Naive thymus-derived CD4-positive, alpha-beta T cell (primary cell): ENCODE measurements at regions of chr10 and their contacts with region 1.

Region 1: DNA sequence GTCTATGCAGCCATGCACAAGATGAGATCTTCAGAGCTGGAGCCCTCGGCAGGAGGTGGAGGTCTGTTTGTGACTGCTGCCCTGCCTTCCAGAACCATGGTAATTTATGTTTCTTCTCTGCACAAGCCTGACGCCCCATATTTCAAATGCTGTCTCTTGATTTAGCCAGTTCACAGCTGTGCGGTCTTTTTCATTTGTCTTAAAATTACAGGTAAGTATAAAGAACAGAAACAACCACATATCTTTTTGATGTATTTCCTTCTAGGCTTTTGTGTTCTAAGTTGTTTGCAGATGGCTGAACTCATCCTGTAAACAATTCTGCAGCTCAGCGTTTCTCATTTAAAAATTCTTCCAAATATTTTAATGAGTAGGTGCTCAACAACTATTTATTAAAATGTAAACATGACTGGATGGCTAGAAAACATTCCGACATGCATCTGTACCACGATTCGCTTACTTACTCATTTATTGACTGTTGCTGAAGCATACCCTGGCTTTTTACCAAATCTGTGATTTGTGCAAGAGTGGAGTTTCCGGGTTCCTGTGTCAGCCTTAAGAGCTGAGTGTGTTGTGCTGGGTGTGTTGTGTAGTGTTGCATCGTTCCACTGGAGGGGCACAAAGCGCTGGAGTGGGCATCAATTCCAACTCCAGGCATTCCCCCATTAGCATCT is 58.9 kb downstream of the PIP4K2A start:
- DNase-seq: peak in 7 of 9 donors; percentile 69 to 90 (median 86)
- ATAC-seq: peak; percentile 89
- H3K4me3 ChIP-seq: peak overlapping the region; percentile 23
- H3K4me3 Mint-ChIP-seq: peak overlapping the region; percentile 67 to 87 (median 81)
- H3K27ac ChIP-seq: peak overlapping the region; percentile 54
- H3K27ac Mint-ChIP-seq: peak overlapping the region; percentile 82 to 97 (median 92)
- H3K4me1 ChIP-seq: peaks cover 84 to 88% of the 10 kb centered on the region in 2 donors
- H3K4me1 Mint-ChIP-seq: peaks cover 84 to 100% (median 90%) of the 10 kb centered on the region in 7 donors
- H3K27me3 ChIP-seq: no peaks in the 10 kb centered on the region
- H3K27me3 Mint-ChIP-seq: no peaks in the 10 kb centered on the region

Region 2: DNA sequence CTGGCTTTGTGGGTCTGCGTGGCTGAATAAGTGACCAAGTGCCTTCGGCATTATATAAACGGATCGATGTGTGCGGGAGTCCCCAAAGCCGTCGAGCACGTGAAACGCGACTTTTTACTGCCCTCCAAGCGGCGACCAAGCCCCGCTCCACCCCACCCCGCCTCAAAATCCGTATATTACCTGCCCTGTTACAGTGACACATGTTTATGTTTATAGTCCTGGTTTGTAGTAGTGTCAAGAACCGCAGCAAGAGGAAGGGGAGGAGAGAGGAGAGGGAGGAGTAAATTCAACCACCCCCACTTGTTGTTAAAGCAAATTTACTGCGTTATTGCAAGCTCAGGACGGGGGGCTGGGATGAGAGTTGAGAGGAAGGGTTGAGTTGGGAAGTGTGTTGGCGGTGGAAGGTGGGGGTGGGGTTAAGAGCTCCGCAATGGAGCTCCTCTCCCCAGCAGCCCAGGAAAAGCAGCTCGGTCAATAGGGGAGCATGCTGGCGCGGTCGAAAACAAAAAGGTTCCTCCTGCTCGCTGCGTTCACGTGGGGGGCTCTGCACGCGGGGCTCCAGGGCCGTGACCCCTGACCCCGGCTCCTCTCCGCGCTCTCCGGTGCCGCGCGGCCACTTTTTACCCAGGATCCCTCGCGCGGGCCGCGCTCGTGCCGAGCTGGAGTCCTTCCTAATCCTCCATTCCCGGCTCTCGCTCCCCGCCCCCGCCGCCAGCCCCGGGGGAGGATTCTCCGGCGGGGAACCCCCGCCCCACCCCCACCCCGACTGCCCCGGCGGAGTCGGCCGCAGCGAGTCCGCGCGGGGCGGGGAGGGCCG is 1129.9 kb before region 1 on chr10 and contains the start of gene SKIDA1:
- CTCF ChIA-PET with region 1: no interaction called
- POLR2A ChIA-PET with region 1: no interaction called
- intact Hi-C with region 1: loop called in 1 of 2 experiments (anchors 10 kb)
- DNase-seq: peak; percentile 31 to 72 (median 64)
- ATAC-seq: peak; percentile 73
- H3K4me3 ChIP-seq: peak within 1 kb of the TSS; percentile 79
- H3K4me3 Mint-ChIP-seq: peak within 1 kb of the TSS; percentile 85 to 99 (median 96)
- H3K27ac ChIP-seq: peak within 1 kb of the TSS; percentile 68
- H3K27ac Mint-ChIP-seq: peak within 1 kb of the TSS; percentile 87 to 98 (median 97)
- H3K4me1 ChIP-seq: peaks cover 4 to 17% of the 10 kb centered on the region in 2 donors
- H3K4me1 Mint-ChIP-seq: peaks cover 16 to 39% (median 38%) of the 10 kb centered on the region in 7 donors
- H3K27me3 ChIP-seq: peaks cover 4 to 6% of the 10 kb centered on the region in 2 donors
- H3K27me3 Mint-ChIP-seq: peaks cover 20 to 70% (median 38%) of the 10 kb centered on the region in 5 donors
- total RNA-seq, gene SKIDA1: 0.17 to 0.45 (median 0.28) TPM in 4 of 5 experiments, not detected in the other

Region 3: GRCh38 chr10:21989453-21990154 is 665.8 kb before region 1 on chr10:
- CTCF ChIA-PET with region 1: no interaction called
- POLR2A ChIA-PET with region 1: no interaction called
- intact Hi-C with region 1: no loop called
- DNase-seq: peak in 7 of 9 donors; percentile 14 to 52 (median 36)
- ATAC-seq: peak; percentile 89
- H3K4me3 ChIP-seq: no peak overlapping the region
- H3K4me3 Mint-ChIP-seq: no peak overlapping the region
- H3K27ac ChIP-seq: no peak overlapping the region
- H3K27ac Mint-ChIP-seq: peak overlapping the region in 2 of 9 donors; percentile 10 to 47
- H3K4me1 ChIP-seq: no peaks in the 10 kb centered on the region
- H3K4me1 Mint-ChIP-seq: peaks cover 0 to 14% (median 5%) of the 10 kb centered on the region in 7 donors
- H3K27me3 ChIP-seq: no peaks in the 10 kb centered on the region
- H3K27me3 Mint-ChIP-seq: no peaks in the 10 kb centered on the region

Region 4: DNA sequence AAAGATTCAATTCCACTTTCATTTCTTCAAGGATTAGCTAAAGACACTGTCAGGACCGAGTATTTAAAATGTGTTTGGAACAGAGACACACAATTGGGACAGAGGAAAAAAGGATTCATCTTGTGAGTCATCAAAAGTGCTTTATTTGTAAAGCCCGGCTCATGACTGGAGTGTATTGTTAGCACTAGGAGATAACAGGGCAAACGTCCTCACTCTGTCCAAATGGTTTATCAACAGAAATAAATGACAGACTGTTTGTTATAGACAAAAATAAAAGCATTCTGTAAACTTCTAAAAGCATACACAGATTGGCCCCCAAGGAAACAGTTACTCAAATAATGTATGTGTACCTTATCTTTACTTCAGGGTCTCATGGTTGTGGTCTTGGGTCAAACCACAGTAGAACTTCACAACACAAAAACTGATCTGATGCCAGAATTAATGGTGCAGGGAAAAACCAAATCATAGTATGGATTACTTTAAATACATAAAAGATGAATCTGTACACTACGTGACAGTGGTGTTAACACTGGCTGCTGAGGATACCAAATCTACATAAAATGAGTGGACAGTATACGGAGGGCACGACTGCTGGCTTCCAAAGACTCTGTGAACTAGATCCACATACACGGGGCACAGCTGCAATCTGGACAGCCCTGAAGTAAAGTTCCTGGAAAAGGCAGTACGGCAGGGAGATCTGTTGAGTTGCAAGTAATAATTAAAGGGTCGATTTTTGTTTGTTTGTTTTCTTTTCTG is 120.4 kb before region 1 on chr10:
- CTCF ChIA-PET with region 1: no interaction called
- POLR2A ChIA-PET with region 1: no interaction called
- intact Hi-C with region 1: no loop called
- DNase-seq: no peak
- ATAC-seq: no peak
- H3K4me3 ChIP-seq: no peak overlapping the region
- H3K4me3 Mint-ChIP-seq: no peak overlapping the region
- H3K27ac ChIP-seq: no peak overlapping the region
- H3K27ac Mint-ChIP-seq: peak overlapping the region in 2 of 9 donors; percentile 12 to 16
- H3K4me1 ChIP-seq: no peaks in the 10 kb centered on the region
- H3K4me1 Mint-ChIP-seq: no peaks in the 10 kb centered on the region
- H3K27me3 ChIP-seq: no peaks in the 10 kb centered on the region
- H3K27me3 Mint-ChIP-seq: no peaks in the 10 kb centered on the region

Region 5: GRCh38 chr10:22630234-22631174 is 24.9 kb before region 1 on chr10:
- CTCF ChIA-PET with region 1: interaction called, 5 read pairs
- POLR2A ChIA-PET with region 1: interaction called, 11 read pairs
- intact Hi-C with region 1: loop called in 1 of 2 experiments (anchors 1 kb)
- DNase-seq: peak in 6 of 9 donors; percentile 27 to 73 (median 38)
- ATAC-seq: peak; percentile 89
- H3K4me3 ChIP-seq: peak overlapping the region; percentile 37
- H3K4me3 Mint-ChIP-seq: peak overlapping the region; percentile 3 to 85 (median 72)
- H3K27ac ChIP-seq: peak overlapping the region; percentile 68
- H3K27ac Mint-ChIP-seq: peak overlapping the region; percentile 68 to 98 (median 90)
- H3K4me1 ChIP-seq: peaks cover 66 to 97% of the 10 kb centered on the region in 2 donors
- H3K4me1 Mint-ChIP-seq: peaks cover 65 to 100% (median 98%) of the 10 kb centered on the region in 7 donors
- H3K27me3 ChIP-seq: no peaks in the 10 kb centered on the region
- H3K27me3 Mint-ChIP-seq: no peaks in the 10 kb centered on the region